ENCODE measurements at regions of chr1 and their contacts with region 1.

Region 1: DNA sequence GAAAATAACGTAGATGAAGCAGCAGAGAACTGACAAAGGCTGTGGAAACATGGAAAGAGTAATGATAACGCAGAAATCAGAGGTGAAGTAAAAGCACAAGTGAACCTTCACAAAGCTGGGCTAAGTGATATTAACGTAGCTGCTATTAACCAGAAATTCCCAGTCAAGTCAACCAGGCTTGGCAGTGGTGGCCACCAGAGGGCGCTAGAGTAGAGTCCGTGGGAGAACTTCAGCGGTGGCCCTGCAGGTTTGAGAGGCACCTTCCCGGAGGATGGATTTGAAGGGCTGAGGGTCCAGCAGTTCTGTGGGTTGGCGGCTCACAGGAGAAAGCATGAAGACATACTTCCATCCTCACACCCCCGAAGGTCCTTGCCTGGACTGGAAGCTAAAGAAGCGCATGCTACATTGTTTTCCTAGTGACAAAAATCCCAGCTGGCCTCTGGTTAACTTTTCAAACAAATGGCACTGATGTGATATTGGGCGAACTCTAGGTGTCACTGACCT is 81.7 kb upstream of the ZNF648 start:
- DNase-seq: peak; percentile 90
- H3K4me3 Mint-ChIP-seq: no peak overlapping the region
- H3K27ac Mint-ChIP-seq: no peak overlapping the region
- H3K4me1 Mint-ChIP-seq: peaks cover 32% of the 10 kb centered on the region
- H3K27me3 Mint-ChIP-seq: peaks cover 2% of the 10 kb centered on the region

Region 2: GRCh38 chr1:182129398-182129797 is 13.8 kb before region 1 on chr1:
- CTCF ChIA-PET with region 1: interaction called, 17 read pairs
- POLR2A ChIA-PET with region 1: no interaction called
- DNase-seq: no peak
- H3K4me3 Mint-ChIP-seq: no peak overlapping the region
- H3K27ac Mint-ChIP-seq: no peak overlapping the region
- H3K4me1 Mint-ChIP-seq: no peaks in the 10 kb centered on the region
- H3K27me3 Mint-ChIP-seq: peaks cover 9% of the 10 kb centered on the region

Region 3: GRCh38 chr1:182249201-182249676 is 106.0 kb after region 1 on chr1:
- CTCF ChIA-PET with region 1: interaction called, 10 read pairs
- POLR2A ChIA-PET with region 1: no interaction called
- DNase-seq: no peak
- H3K4me3 Mint-ChIP-seq: no peak overlapping the region
- H3K27ac Mint-ChIP-seq: no peak overlapping the region
- H3K4me1 Mint-ChIP-seq: peaks cover 22% of the 10 kb centered on the region
- H3K27me3 Mint-ChIP-seq: no peaks in the 10 kb centered on the region

Region 4: GRCh38 chr1:182397771-182398393 is 254.7 kb after region 1 on chr1:
- CTCF ChIA-PET with region 1: interaction called, 57 read pairs
- POLR2A ChIA-PET with region 1: interaction called, 3 read pairs
- DNase-seq: no peak
- H3K4me3 Mint-ChIP-seq: no peak overlapping the region
- H3K27ac Mint-ChIP-seq: no peak overlapping the region
- H3K4me1 Mint-ChIP-seq: peaks cover 8% of the 10 kb centered on the region
- H3K27me3 Mint-ChIP-seq: peaks cover 13% of the 10 kb centered on the region

Measured in activated CD4-positive, alpha-beta T cell treated with anti-CD3 and anti-CD28 coated beads, Interleukin-2, amount 10 ng/mL, durations not matched to agents 7 days and 5 days (primary cell).